ENCODE measurements at regions of chr4 and their contacts with region 1.

Region 1: GRCh38 chr4:124111922-124112321 is 600.6 kb downstream of the ANKRD50 start:
- DNase-seq: no peak
- ATAC-seq: peak; percentile 86

Region 2: DNA sequence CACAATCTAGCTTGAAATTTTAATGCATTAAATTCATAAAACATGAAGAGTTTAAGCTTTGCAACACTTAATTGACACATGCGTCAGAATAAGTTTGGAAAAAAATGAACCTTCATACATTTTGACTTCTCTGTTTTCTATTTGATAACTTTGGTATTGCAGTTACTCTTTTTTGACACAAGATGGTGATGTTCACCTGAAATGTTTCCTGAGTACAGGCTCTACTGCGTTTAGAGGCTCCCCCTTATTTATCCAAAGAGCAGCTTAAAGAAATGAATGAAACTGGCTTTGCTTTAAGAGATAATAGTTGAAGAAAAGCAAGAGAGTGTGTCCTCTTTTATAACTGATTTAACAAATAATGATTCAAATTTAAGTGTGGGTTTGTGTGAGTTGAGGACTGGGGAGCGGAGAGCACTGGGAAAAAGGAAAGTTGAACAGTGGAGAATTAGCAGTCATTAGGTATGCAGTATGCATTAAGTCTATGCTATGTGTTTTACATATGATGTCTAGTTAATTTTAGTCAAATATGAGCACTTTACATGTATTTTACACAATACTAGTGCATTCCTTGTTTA is 1008.9 kb before region 1 on chr4:
- intact Hi-C with region 1: loop called (anchors 2 kb)
- DNase-seq: no peak
- ATAC-seq: peak; percentile 57

Region 3: GRCh38 chr4:123127218-123127617 is 984.7 kb before region 1 on chr4:
- intact Hi-C with region 1: loop called (anchors 5 kb)
- DNase-seq: no peak
- ATAC-seq: no peak

Region 4: GRCh38 chr4:123564758-123565346 is 547.1 kb before region 1 on chr4:
- intact Hi-C with region 1: loop called (anchors 10 kb)
- DNase-seq: no peak
- ATAC-seq: peak; percentile 91

Region 5: GRCh38 chr4:123776254-123776653 is 335.7 kb before region 1 on chr4:
- intact Hi-C with region 1: loop called (anchors 1 kb)
- DNase-seq: no peak
- ATAC-seq: no peak

Measured in Right ventricle myocardium inferior (tissue), 1 donor.